Left lung (tissue), 14 donors: ENCODE measurements at regions of chr7 and their contacts with region 1.

Region 1: DNA sequence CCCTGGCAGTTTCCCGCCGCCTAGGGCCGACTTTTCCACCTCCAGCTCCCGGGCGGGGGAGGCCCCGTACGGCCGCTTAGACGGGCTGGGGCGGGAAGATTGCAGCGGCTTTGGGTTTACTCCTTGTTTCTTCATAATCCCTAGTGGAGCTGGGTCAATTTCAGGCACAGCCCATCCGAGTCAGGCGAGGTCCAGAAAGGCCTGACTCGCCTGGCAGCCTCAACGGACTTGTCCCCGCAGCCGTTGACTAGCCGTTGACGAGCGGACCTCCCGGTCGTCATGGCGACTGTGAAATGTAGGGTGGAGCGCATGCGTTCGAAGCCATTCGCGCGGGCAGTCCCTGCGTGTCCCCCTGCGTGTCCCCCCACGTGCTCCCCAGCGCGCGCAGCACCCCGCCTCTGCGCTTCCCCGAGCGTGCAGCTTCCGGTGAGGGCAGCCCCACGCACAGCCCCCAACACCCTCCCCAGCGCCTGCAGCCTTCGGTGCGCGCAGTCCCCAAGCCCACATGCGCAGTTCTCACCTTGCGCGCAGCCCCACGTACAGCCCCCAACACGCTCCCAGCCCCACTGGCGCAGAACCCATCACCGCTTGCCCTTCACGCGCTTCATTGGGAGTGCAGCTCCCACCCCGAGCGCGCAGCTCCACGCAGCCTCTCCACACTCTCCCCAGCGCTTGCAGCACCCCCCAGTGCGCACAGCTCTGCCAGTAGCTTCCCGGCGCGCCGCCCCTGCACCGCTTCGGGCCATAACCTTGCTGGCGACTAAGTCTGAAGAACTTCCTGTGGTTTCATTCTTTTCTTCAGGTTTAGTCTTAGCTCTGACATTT is 67.8 kb downstream of the TBX20 start:
- DNase-seq: peak; percentile 15 to 72 (median 40)
- ATAC-seq: peak; percentile 58
- H3K4me3 ChIP-seq: peak overlapping the region; percentile 11 to 18
- H3K27ac ChIP-seq: no peak overlapping the region
- H3K4me1 ChIP-seq: peaks cover 0 to 5% of the 10 kb centered on the region in 2 donors
- H3K27me3 ChIP-seq: peaks cover 16 to 60% of the 10 kb centered on the region in 2 donors
- CTCF ChIP-seq: no peak

Region 2: DNA sequence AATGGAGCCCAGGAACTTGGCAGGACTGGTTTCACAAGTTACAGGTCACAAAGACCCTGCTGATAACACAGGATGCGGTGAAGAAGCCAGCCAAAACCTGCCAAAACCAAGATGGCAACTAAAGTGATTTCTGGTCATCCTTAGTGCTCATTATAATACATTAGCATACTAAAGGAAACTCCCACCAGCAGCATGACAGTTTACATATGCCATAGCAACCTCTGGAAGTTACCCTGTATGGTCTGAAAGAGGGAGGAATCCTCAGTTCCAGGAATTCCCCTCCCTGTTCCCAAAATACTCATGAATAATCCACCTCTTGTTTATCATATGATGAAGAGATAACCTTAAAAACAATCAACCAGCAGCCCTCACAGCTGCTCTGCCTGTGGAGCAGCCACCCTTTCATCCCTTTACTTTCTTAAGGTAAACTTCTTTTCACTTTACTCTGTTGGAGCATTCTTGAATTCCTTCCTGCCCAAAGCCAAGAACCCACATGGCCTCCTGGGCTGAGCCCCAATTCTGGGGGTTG is 170.7 kb before region 1 on chr7:
- intact Hi-C with region 1: no loop called
- DNase-seq: no peak
- ATAC-seq: no peak
- H3K4me3 ChIP-seq: no peak overlapping the region
- H3K27ac ChIP-seq: no peak overlapping the region
- H3K4me1 ChIP-seq: no peaks in the 10 kb centered on the region
- H3K27me3 ChIP-seq: no peaks in the 10 kb centered on the region
- CTCF ChIP-seq: no peak

Region 3: DNA sequence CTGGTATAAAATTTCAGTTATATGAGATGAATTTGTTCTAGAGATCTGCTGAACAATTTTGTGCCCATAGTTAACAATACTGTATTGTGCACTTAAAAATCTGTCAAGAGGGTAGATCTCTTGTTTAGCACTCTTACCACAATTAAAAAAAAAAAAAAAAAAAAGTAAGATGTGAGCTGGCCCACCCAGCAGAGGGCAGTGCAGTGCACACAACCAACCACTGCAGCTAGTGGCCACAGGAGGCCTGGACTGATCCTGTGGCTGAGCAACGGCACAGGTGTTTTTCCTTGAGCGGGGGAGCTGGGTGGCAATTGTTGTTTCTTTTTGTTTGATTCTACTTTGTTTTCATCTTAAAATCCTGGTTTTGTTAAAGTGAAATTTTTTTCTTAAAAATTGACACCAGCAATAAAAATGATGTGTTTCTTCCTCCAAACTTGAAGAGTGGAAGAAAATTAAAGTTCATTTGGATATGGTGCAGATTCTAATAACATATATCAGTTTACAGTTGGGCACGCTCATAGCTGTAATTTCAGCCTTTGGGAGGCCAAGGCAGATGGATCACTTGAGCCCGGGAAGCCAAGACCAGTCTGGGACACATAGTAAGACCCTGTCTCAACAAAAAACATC is 238.9 kb after region 1 on chr7:
- intact Hi-C with region 1: no loop called
- DNase-seq: peak in 2 of 4 donors; percentile 40 to 53
- ATAC-seq: peak; percentile 97
- H3K4me3 ChIP-seq: no peak overlapping the region
- H3K27ac ChIP-seq: no peak overlapping the region
- H3K4me1 ChIP-seq: no peaks in the 10 kb centered on the region
- H3K27me3 ChIP-seq: no peaks in the 10 kb centered on the region
- CTCF ChIP-seq: peak; percentile 55 to 68

Region 4: GRCh38 chr7:35537067-35538023 is 351.2 kb after region 1 on chr7:
- intact Hi-C with region 1: loop called in 1 of 2 experiments (anchors 10 kb)
- DNase-seq: peak; percentile 71 to 93 (median 80)
- ATAC-seq: peak; percentile 100
- H3K4me3 ChIP-seq: peak overlapping the region; percentile 20 to 30
- H3K27ac ChIP-seq: no peak overlapping the region
- H3K4me1 ChIP-seq: peaks cover 0 to 8% of the 10 kb centered on the region in 2 donors
- H3K27me3 ChIP-seq: peaks cover 0 to 16% of the 10 kb centered on the region in 2 donors
- CTCF ChIP-seq: peak; percentile 91 to 92

Region 5: DNA sequence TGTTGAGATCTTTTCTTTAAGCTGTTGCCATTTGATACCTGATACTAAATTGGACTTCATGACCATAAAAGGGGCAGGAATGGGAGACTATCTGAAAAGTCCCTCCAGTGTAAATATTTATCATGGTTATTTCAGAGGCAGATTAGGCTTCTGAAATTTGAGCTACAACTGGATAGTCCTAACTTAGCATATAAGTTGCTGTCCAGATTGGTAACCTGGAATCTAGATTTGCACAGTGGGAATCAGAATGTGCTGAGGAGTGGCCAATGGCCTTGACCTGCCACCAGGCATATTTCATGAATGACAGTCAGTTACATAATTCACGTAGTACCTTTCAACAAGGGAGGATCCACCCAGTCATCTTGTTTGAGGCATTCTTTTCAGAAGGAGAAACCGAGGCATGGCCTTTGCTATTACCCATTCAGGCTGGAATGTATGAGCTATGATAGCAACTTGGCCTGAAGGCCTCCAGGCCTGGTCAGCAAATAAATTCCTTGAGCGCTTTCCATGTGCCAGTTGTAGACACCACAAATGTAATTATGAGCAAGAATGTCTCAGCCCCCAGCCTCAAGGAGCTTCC is 1046.9 kb after region 1 on chr7:
- intact Hi-C with region 1: no loop called
- DNase-seq: no peak
- ATAC-seq: no peak
- H3K4me3 ChIP-seq: no peak overlapping the region
- H3K27ac ChIP-seq: no peak overlapping the region
- H3K4me1 ChIP-seq: no peaks in the 10 kb centered on the region
- H3K27me3 ChIP-seq: no peaks in the 10 kb centered on the region
- CTCF ChIP-seq: no peak